GM13976 (cell line): ENCODE measurements at regions of chr16 and their contacts with region 1.

Region 1: GRCh38 chr16:14529010-14529669 is 100.9 kb downstream of the PARN start:
- DNase-seq: peak; percentile 69
- CTCF ChIP-seq: peak; percentile 44

Region 2: DNA sequence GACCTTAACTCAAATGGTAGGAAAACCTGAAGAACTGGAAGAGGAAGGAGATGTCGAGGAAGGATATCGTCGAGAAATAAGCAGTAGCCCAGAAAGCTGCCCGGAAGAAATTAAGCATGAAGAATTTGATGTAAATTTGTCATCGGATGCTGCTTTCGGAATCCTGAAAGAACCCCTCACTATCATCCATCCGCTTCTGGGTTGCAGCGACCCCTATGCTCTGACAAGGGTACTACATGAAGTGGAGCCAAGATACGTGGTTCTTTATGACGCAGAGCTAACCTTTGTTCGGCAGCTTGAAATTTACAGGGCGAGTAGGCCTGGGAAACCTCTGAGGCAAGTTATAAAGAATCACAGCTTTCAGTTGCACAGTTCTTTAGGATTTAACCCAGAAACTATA is 593.7 kb before region 1 on chr16:
- in situ Hi-C with region 1: loop called (anchors 25 kb)
- DNase-seq: no peak
- CTCF ChIP-seq: no peak

Region 3: GRCh38 chr16:14300705-14301168 is 228.4 kb before region 1 on chr16:
- in situ Hi-C with region 1: loop called (anchors 5 kb)
- DNase-seq: peak; percentile 79
- CTCF ChIP-seq: peak; percentile 82